ENCODE measurements at regions of chr7 and their contacts with region 1.

Region 1: DNA sequence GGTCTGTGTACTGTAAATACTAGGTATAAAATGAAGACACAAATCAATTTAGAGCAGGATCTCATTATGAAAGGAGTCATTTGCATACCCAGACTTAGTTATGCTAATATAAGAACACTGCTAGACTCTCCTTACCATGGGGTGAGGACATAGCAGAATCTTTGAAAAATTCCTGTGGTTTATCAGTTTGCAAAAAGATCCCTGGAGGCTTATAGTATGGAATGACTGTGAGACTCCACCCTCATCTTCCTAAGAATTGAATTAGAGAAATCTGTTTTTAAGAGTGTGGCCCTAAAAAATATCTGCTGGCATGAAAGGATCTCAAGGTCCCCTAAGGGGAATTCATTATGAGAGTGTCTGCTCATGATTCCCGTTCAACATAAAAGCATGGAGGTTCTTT is 63.2 kb downstream of the WNT2 start:
- DNase-seq: no peak
- H3K4me3 ChIP-seq: no peak overlapping the region
- H3K27ac ChIP-seq: no peak overlapping the region
- H3K4me1 ChIP-seq: no peaks in the 10 kb centered on the region
- H3K27me3 ChIP-seq: peaks cover 9% of the 10 kb centered on the region
- CTCF ChIP-seq: no peak

Region 2: GRCh38 chr7:117143580-117143979 is 116.0 kb before region 1 on chr7:
- CTCF ChIA-PET with region 1: no interaction called
- POLR2A ChIA-PET with region 1: interaction called, 11 read pairs
- intact Hi-C with region 1: no loop called
- DNase-seq: no peak
- H3K4me3 ChIP-seq: no peak overlapping the region
- H3K27ac ChIP-seq: no peak overlapping the region
- H3K4me1 ChIP-seq: no peaks in the 10 kb centered on the region
- H3K27me3 ChIP-seq: no peaks in the 10 kb centered on the region
- CTCF ChIP-seq: no peak

Region 3: DNA sequence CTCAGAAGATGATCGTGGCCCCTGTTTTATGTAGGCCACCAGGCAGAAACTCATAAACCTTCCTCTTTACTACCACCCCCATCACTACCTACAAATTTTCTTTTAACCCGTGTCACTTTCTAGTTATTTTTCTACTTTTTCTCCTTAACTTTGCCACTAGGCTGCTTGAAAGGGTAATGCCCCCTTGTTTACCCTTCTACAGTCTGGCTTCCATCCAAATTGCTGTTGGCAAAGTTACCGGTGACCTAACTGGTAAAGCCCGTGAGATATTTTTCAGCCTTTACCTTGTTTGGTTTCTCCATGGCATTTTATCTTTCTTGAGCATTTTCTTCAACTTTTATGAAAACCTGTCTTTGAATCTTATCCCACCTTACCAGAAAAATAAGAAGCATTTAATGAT is 89.7 kb before region 1 on chr7:
- CTCF ChIA-PET with region 1: no interaction called
- POLR2A ChIA-PET with region 1: no interaction called
- intact Hi-C with region 1: no loop called
- DNase-seq: no peak
- H3K4me3 ChIP-seq: no peak overlapping the region
- H3K27ac ChIP-seq: no peak overlapping the region
- H3K4me1 ChIP-seq: no peaks in the 10 kb centered on the region
- H3K27me3 ChIP-seq: no peaks in the 10 kb centered on the region
- CTCF ChIP-seq: no peak